WTC11 (cell line): ENCODE measurements at regions of chr15 and their contacts with region 1.

Region 1: GRCh38 chr15:92808978-92809879 is 90.9 kb upstream of the CHD2 start:
- DNase-seq: peak; percentile 99
- ATAC-seq: peak; percentile 81
- H3K4me3 Mint-ChIP-seq: peak overlapping the region; percentile 84
- H3K27ac Mint-ChIP-seq: peak overlapping the region; percentile 100
- H3K4me1 Mint-ChIP-seq: peaks cover 43% of the 10 kb centered on the region
- H3K27me3 Mint-ChIP-seq: no peaks in the 10 kb centered on the region
- CTCF ChIP-seq: peak; percentile 91

Region 2: DNA sequence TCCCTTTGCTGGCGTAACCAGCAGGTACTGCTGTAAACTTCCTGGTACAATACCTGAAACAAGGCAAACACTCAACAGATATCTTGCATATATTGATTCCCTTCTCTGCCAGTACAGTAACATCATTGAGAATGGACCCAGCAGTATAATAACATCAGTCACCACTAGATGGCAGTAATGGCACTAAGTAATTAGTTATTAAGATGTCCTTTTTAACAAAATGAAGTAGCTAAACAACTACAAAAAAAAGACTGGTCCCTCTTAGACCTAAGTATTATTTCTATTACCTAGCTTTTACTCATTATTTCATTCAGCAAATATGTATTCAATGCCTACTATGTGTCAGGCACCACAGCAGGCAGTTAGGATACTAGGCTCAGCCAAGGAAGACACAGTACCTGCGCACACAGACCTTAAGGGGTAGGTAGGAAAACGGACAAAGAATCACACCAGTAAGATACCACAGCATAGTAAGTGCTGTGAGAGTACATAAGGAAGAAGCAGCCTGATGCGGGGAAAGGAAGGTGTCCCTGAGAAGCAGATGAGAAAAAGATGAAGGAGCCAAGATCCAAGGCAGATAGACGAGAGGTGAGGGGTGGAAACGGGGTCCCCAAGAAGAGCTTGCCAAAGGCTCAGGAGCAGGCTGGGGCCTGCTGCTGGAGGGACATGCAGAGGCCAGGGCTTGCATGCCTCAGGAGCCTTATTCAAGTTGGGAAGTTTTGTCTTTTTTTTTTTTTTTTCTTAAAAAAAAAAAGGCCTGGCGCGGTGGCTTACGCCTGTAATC is 11.9 kb before region 1 on chr15:
- CTCF ChIA-PET with region 1: interaction called, 37 read pairs
- POLR2A ChIA-PET with region 1: interaction called, 3 read pairs
- DNase-seq: no peak
- ATAC-seq: peak; percentile 82
- H3K4me3 Mint-ChIP-seq: no peak overlapping the region
- H3K27ac Mint-ChIP-seq: peak overlapping the region; percentile 93
- H3K4me1 Mint-ChIP-seq: peaks cover 8% of the 10 kb centered on the region
- H3K27me3 Mint-ChIP-seq: no peaks in the 10 kb centered on the region
- CTCF ChIP-seq: peak; percentile 56

Region 3: GRCh38 chr15:92820236-92821021 is 11.2 kb after region 1 on chr15:
- CTCF ChIA-PET with region 1: interaction called, 16 read pairs
- POLR2A ChIA-PET with region 1: interaction called, 41 read pairs
- DNase-seq: peak; percentile 92
- ATAC-seq: peak; percentile 72
- H3K4me3 Mint-ChIP-seq: peak overlapping the region; percentile 67
- H3K27ac Mint-ChIP-seq: peak overlapping the region; percentile 99
- H3K4me1 Mint-ChIP-seq: peaks cover 73% of the 10 kb centered on the region
- H3K27me3 Mint-ChIP-seq: no peaks in the 10 kb centered on the region
- CTCF ChIP-seq: no peak

Region 4: DNA sequence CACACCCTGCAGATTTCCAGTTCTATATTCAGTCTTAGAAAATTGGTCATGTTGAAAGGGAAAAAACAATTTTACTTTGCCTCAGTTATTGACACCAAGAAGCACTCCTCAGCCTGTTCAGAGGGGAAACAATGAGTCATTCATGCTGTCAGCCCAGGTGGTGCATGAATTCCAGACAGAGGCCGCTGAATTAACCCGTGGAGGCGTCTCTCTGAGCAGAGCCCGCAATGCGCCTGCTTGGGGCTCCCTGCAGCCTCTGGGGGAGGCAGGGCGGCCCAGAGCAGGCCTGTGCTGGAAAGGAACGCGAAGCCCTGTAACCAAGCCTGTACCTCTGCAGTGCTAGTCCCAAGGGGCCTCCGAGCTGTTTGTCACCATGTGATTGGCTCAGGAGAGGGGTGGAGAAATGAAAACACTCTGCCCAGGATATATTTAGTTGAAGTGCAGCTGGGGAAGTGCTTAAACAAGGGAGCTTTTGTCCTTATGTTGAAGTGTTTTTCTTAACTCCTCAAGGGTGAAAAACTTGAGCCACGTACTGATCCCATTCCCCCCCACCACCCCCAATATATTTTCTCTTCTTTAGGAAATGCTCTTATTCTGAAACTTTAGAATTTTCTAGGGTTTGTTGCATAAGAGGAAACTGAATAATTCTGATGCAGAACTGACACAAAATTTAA is 22.6 kb after region 1 on chr15:
- CTCF ChIA-PET with region 1: interaction called, 13 read pairs
- POLR2A ChIA-PET with region 1: interaction called, 15 read pairs
- DNase-seq: peak; percentile 92
- ATAC-seq: peak; percentile 100
- H3K4me3 Mint-ChIP-seq: peak overlapping the region; percentile 50
- H3K27ac Mint-ChIP-seq: peak overlapping the region; percentile 99
- H3K4me1 Mint-ChIP-seq: peaks cover 47% of the 10 kb centered on the region
- H3K27me3 Mint-ChIP-seq: no peaks in the 10 kb centered on the region
- CTCF ChIP-seq: no peak

Region 5: DNA sequence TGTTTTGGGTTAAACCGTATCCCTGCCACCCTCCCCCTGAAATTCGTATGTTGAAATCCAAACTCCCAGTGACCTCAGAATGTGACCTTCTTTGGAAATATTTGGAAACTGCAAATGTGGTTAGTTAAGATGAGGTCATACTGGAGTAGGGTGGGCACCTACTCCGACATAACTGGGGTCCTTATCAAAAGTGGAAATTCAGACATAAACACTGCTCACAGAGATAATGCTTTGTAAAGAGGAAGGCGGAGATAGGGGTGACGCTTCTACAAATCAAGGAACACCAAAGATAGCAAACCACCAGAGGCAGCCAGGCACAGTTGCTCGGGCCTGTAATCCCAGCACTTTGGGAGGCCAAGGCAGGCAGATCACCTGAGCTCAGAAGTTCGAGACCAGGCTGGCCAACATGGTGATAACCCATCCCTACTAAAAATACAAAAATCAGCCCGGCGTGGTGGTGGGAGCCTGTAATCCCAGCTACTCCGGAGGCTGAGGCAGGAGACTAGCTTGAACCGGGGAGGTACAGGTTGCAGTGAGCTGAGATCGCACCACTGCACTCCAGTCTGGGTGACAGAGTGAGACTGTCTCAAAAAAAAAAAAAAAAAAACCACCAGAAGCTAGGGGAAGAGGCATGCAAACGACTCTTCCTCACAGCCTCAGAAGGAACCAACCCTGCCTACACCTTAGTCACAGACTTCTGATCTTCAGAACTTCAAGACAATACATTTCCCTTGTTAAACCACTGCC is 39.8 kb after region 1 on chr15:
- CTCF ChIA-PET with region 1: no interaction called
- POLR2A ChIA-PET with region 1: no interaction called
- DNase-seq: no peak
- ATAC-seq: no peak
- H3K4me3 Mint-ChIP-seq: no peak overlapping the region
- H3K27ac Mint-ChIP-seq: no peak overlapping the region
- H3K4me1 Mint-ChIP-seq: peaks cover 11% of the 10 kb centered on the region
- H3K27me3 Mint-ChIP-seq: peaks cover 4% of the 10 kb centered on the region
- CTCF ChIP-seq: no peak

Region 6: GRCh38 chr15:92903941-92904831 is 95.0 kb after region 1 on chr15:
- CTCF ChIA-PET with region 1: interaction called, 8 read pairs
- POLR2A ChIA-PET with region 1: interaction called, 63 read pairs
- DNase-seq: peak; percentile 99
- ATAC-seq: peak; percentile 86
- H3K4me3 Mint-ChIP-seq: peak overlapping the region; percentile 95
- H3K27ac Mint-ChIP-seq: peak overlapping the region; percentile 100
- H3K4me1 Mint-ChIP-seq: peaks cover 51% of the 10 kb centered on the region
- H3K27me3 Mint-ChIP-seq: no peaks in the 10 kb centered on the region; the same call in 1 of the 2 replicates
- CTCF ChIP-seq: no peak

Region 7: DNA sequence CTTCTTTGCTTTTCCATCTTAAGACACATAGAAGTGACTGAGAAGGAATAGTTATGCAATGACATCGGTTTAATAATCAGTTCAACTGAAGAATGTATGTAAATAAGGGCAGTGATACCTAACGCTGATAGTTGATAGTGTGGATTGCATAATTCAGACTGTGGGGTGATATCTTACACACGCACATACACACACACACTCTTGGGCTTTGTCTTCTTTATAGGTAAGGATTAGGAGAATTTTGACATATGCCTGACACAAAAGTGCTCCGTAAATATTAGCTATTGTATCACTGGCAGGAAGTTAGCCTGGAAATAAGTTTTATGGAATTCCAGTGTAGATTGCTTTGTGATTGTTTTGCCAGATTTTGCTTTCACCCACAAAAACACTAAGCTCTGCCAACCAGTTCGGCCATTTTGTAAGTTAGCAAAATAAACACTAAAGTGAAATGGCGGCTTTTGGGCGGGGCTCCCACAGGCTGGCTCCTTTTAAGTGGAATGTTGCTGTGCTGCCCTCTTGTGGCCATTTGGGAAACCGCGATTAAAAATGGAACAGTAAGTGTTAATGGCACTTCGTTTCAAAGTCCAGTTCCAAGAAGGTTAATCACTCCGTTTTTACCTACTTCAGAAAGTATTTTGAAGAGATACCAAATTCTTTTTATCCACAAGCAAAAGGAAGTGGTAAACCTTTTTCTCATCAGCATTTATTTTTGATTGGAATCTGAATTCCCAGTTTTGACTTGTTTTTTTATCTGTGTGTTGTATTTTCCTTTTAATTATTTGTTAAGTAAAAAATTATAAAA is 108.6 kb after region 1 on chr15:
- CTCF ChIA-PET with region 1: interaction called, 24 read pairs
- POLR2A ChIA-PET with region 1: interaction called, 15 read pairs
- DNase-seq: peak; percentile 94
- ATAC-seq: peak; percentile 17
- H3K4me3 Mint-ChIP-seq: no peak overlapping the region
- H3K27ac Mint-ChIP-seq: peak overlapping the region; percentile 98
- H3K4me1 Mint-ChIP-seq: peaks cover 85% of the 10 kb centered on the region
- H3K27me3 Mint-ChIP-seq: peaks cover 2% of the 10 kb centered on the region; the same call in 1 of the 2 replicates
- CTCF ChIP-seq: peak; percentile 74